ENCODE measurements at regions of chr16 and their contacts with region 1.

Region 1: DNA sequence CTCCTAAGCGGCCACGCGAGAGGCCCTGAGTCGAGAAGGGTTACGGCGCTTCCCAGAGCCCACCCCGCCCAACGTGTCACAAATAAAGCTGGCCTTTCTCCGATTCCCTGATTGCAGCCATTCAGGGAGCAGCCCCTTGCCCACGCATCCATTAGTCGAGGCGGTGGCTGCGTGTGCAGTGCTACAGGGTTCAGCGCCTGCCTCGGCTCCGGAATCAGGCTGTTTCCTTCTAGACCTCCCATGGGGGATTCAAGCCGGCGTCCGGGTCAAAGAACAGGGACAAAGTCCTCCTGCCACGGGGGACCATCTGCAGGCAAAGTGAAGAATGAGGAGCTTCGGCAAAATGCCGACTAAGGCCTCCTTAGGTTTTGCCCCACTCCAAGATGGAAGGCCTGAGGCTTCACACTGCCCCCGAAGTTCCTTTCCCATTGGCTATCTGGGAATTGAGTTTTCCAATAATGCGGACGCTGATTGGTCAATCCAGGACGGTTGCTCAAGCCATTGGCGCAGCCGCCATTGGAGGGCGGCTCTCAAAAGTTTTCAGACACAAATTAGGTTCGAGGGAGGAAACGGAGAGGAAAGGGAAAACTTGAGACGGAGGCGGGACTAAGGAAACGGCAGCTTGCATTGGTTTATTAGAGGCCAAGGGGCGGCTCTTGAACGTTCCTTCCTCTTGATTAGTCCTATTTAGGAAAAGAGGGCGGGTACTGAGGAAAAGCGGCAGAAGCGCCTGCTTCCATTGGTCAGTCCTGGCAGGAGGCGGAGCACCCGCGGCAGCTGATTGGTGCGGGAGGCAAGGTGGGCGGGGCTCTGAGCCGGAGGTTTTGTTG is 430 bp upstream of the KATNB1 start:
- DNase-seq: peak; percentile 99
- H3K4me3 Mint-ChIP-seq: peak overlapping the region; percentile 99
- H3K27ac Mint-ChIP-seq: peak overlapping the region; percentile 98
- H3K4me1 Mint-ChIP-seq: peaks cover 21% of the 10 kb centered on the region
- H3K27me3 Mint-ChIP-seq: no peaks in the 10 kb centered on the region

Region 2: DNA sequence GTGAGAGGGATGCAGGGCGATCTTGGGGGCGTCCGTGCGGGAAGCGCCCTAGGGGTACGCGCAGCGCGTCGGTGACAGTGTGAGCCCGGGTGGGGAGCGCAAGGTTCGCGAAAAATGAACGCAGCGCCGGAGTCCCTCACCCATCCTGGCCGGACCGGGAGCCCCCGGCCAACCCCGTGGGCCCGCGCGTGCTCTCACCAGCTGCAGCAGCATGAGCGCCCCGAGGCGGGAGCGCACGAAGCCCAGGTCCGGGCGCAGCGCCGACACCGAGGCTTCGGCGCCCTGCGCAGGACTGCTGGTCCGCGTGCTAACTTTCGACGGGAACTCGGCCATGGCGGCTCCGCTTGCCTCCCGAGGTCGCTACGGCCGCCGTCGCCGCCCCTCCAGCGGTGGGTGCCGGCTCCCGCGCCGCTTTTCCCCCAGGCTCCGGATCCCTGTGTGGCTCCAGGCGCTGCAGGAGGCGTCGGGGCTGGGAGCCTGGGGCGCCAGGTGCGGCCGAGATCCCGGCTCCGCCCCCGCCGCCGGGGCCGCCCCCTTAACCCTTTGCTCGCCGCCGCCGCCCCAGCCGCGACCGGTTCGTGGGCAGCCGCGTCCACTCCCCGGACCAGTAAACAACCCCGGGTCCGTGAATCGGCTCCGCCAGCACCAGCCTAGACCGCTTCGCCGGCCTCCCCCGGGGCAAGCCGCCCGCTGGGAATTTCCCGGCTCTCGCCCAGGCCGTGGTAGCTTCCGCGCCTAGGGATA is 450.8 kb before region 1 on chr16 and contains the start of gene PLLP:
- intact Hi-C with region 1: no loop called
- DNase-seq: peak; percentile 86
- H3K4me3 Mint-ChIP-seq: peak within 1 kb of the TSS; percentile 77
- H3K27ac Mint-ChIP-seq: peak within 1 kb of the TSS; percentile 63
- H3K4me1 Mint-ChIP-seq: peaks cover 21% of the 10 kb centered on the region
- H3K27me3 Mint-ChIP-seq: peaks cover 35% of the 10 kb centered on the region
- total RNA-seq, gene PLLP: not detected in 2 replicates

Region 3: DNA sequence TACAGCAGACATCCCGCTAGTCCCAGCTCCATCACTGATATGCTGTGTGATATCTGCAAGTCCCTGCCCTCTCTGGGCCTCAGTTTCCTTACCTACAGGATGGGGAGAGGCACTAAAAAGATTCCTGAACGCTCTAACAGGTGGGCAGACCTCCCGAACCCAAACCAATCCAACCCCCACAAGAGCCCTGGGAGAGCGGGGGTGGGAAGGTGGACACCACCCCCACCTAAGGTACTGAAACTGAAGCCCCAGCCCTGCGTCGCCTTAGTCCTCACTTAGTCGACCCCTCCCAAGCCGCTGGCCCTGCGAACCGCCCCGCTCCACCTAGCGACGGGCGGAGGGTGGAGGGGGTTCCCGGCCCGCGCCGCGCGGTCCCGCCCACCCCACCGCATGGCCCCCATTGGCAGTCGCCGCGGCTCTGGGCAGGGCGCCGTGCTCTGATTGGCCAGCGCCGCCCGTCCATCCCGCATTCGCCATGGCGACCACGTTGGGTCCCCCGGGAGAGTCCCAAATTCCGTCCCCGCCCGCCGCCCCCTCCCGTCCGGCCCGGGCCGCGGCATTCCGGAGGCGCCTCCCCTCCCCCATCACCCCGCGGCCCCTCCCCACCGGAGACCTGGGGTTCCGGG is 199.3 kb before region 1 on chr16:
- intact Hi-C with region 1: loop called (anchors 2 kb)
- DNase-seq: peak; percentile 98
- H3K4me3 Mint-ChIP-seq: peak overlapping the region; percentile 86
- H3K27ac Mint-ChIP-seq: peak overlapping the region; percentile 89
- H3K4me1 Mint-ChIP-seq: peaks cover 63% of the 10 kb centered on the region
- H3K27me3 Mint-ChIP-seq: no peaks in the 10 kb centered on the region

Region 4: DNA sequence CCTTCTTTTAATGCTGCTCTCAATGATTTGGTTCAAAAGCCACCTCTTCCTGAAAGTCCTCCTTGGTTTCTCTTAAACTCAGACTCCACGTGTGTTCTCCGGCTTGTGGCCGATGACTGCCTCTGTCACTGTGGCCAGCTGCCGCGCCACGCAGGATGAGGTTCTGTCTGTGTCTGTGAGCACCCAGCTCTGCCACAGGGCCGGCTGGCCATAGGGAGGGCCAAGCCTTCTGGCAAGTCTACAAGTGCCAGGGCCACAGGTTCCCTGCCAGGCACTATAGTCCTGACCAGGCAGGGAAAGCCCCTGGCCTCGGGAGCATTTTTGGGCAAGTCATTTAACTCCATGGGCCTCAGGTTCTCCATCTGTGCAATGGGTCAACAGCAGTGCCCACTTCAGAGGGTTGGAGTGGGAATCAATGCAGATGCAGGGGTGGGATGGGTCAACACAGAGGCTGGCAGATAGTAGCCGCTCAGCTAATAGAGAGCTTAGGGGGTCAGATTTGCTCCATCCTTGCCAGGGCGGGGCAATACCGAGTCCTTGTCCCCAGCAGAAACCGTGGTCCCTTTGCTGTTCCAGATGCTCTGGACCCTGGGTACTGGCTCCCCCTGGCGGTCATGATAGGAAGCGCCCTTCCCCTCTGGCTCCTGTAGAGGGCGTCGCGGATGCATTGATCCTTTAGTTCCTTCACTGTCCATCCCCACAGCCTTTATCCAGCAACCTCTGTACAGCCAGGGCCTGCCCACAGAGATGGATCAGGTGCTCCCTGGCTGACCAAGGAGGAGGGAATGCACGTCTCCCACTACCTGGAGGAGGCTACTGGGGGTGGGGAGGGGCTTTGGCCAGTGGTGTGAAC is 86.3 kb before region 1 on chr16:
- intact Hi-C with region 1: loop called (anchors 2 kb)
- DNase-seq: peak; percentile 96
- H3K4me3 Mint-ChIP-seq: no peak overlapping the region
- H3K27ac Mint-ChIP-seq: peak overlapping the region; percentile 63
- H3K4me1 Mint-ChIP-seq: peaks cover 31% of the 10 kb centered on the region
- H3K27me3 Mint-ChIP-seq: no peaks in the 10 kb centered on the region

Region 5: GRCh38 chr16:57810197-57811031 is 75.3 kb after region 1 on chr16:
- intact Hi-C with region 1: loop called (anchors 1 kb)
- DNase-seq: peak; percentile 94
- H3K4me3 Mint-ChIP-seq: peak overlapping the region; percentile 65
- H3K27ac Mint-ChIP-seq: peak overlapping the region; percentile 85
- H3K4me1 Mint-ChIP-seq: peaks cover 34% of the 10 kb centered on the region
- H3K27me3 Mint-ChIP-seq: peaks cover 22% of the 10 kb centered on the region

Region 6: GRCh38 chr16:58129097-58129936 is 394.2 kb after region 1 on chr16 and contains the start of gene CFAP20:
- intact Hi-C with region 1: loop called (anchors 1 kb)
- DNase-seq: peak; percentile 99
- H3K4me3 Mint-ChIP-seq: peak within 1 kb of the TSS; percentile 80
- H3K27ac Mint-ChIP-seq: peak within 1 kb of the TSS; percentile 73
- H3K4me1 Mint-ChIP-seq: peaks cover 33% of the 10 kb centered on the region
- H3K27me3 Mint-ChIP-seq: no peaks in the 10 kb centered on the region
- total RNA-seq, gene CFAP20: 62.7 and 63.2 TPM in 2 replicates

Measured in activated CD4-positive, alpha-beta T cell treated with anti-CD3 and anti-CD28 coated beads, Interleukin-2, amount 10 ng/mL, durations not matched to agents 24 days and 14 days (primary cell).